CD4-positive, alpha-beta memory T cell (primary cell): ENCODE measurements at regions of chr16 and their contacts with region 1.

Region 1: DNA sequence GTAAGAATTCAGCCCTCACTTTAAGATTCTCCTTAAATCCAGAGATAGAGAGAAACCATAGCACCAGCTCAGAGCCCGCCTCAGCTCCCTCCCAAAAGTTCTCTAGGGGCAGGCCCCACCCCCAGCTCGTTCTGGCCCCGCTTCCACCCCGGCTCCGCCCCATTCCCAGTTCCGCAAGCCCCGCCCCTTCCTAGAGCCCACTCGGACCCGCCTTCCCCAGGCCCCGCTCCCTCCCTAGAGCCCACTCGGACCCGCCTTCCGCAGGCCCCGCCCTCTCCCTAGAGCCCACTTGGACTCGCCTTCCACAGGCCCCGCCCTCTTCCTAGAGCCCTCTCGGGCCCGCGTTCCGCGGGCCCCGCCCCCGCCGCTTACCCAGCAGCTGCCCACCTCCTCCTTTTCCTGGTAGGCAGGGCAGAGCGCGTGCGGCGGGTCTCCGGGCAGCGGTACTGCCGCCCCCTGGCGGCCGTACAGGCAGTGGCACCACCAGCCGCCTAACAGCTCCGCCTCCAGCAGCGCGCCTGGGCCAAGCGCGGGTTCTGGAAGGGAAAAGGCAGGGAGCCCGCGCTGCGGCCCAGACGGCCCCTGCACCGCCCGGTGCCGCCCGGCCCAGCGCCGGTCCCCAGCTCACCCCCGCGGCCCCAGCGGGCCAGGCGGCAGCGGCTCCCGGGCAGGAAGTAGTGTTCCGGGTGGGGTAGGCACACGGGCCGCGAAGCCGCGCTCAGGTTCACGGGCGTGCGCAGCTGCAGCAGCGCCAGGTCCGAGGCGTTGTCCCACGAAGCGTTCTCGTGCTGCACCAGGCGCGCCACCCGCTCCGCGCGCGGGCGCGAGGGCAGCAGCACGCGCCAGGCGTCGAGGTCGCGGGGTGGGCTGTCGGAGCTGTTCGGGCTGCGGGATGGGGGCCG is 6.8 kb upstream of the PRSS8 start:
- DNase-seq: peak; percentile 94 to 97 (median 96)
- H3K4me3 ChIP-seq: peak overlapping the region in 1 of 2 donors; percentile 75
- H3K4me3 Mint-ChIP-seq: peak overlapping the region; percentile 63 to 80 (median 74)
- H3K27ac ChIP-seq: peak overlapping the region; percentile 42
- H3K27ac Mint-ChIP-seq: peak overlapping the region; percentile 72 to 94 (median 91)
- H3K4me1 ChIP-seq: peaks cover 15% of the 10 kb centered on the region
- H3K4me1 Mint-ChIP-seq: peaks cover 3 to 14% (median 10%) of the 10 kb centered on the region in 4 donors
- H3K27me3 ChIP-seq: no peaks in the 10 kb centered on the region
- H3K27me3 Mint-ChIP-seq: no peaks in the 10 kb centered on the region

Region 2: GRCh38 chr16:30922960-30923535 is 219.3 kb before region 1 on chr16:
- CTCF ChIA-PET with region 1: no interaction called
- POLR2A ChIA-PET with region 1: no interaction called
- intact Hi-C with region 1: loop called (anchors 1 kb)
- DNase-seq: peak; percentile 95 to 98 (median 97)
- H3K4me3 ChIP-seq: peak overlapping the region; percentile 73 to 92
- H3K4me3 Mint-ChIP-seq: peak overlapping the region; percentile 95 to 100 (median 99)
- H3K27ac ChIP-seq: peak overlapping the region; percentile 90
- H3K27ac Mint-ChIP-seq: peak overlapping the region; percentile 98 to 100 (median 99)
- H3K4me1 ChIP-seq: peaks cover 12% of the 10 kb centered on the region
- H3K4me1 Mint-ChIP-seq: peaks cover 7 to 33% (median 17%) of the 10 kb centered on the region in 4 donors
- H3K27me3 ChIP-seq: no peaks in the 10 kb centered on the region
- H3K27me3 Mint-ChIP-seq: no peaks in the 10 kb centered on the region

Region 3: GRCh38 chr16:30984669-30985400 is 157.5 kb before region 1 on chr16 and contains the start of gene HSD3B7:
- CTCF ChIA-PET with region 1: interaction called, 28 read pairs
- POLR2A ChIA-PET with region 1: interaction called, 10 read pairs
- intact Hi-C with region 1: loop called (anchors 1 kb)
- DNase-seq: peak; percentile 60 to 76 (median 65)
- H3K4me3 ChIP-seq: no peak within 1 kb of the TSS
- H3K4me3 Mint-ChIP-seq: no peak within 1 kb of the TSS
- H3K27ac ChIP-seq: no peak within 1 kb of the TSS
- H3K27ac Mint-ChIP-seq: peak within 1 kb of the TSS in 2 of 7 donors; percentile 63 to 66
- H3K4me1 ChIP-seq: peaks cover 6% of the 10 kb centered on the region
- H3K4me1 Mint-ChIP-seq: peaks cover 0 to 6% (median 0%) of the 10 kb centered on the region in 4 donors
- H3K27me3 ChIP-seq: no peaks in the 10 kb centered on the region
- H3K27me3 Mint-ChIP-seq: no peaks in the 10 kb centered on the region
- total RNA-seq, gene HSD3B7: 3.6 to 4.3 TPM

Region 4: DNA sequence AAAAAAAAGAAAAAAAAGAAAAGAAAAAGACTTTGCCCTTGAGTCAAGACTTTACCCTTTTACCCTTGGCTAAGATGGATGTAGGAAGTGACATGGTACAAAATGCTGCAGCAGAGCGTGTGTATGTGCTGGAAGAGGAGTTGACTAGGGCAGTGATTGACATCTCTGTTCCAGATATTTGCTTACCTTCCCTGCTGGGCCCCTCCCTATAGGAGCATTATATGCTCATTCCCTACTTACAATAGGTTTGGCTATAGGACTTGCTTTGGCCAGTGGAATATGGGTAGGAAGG is 98.2 kb before region 1 on chr16:
- CTCF ChIA-PET with region 1: no interaction called
- POLR2A ChIA-PET with region 1: no interaction called
- intact Hi-C with region 1: no loop called
- DNase-seq: no peak
- H3K4me3 ChIP-seq: no peak overlapping the region
- H3K4me3 Mint-ChIP-seq: no peak overlapping the region
- H3K27ac ChIP-seq: no peak overlapping the region
- H3K27ac Mint-ChIP-seq: no peak overlapping the region
- H3K4me1 ChIP-seq: no peaks in the 10 kb centered on the region
- H3K4me1 Mint-ChIP-seq: peaks cover 0 to 2% (median under 1%) of the 10 kb centered on the region in 4 donors
- H3K27me3 ChIP-seq: no peaks in the 10 kb centered on the region
- H3K27me3 Mint-ChIP-seq: no peaks in the 10 kb centered on the region

Region 5: DNA sequence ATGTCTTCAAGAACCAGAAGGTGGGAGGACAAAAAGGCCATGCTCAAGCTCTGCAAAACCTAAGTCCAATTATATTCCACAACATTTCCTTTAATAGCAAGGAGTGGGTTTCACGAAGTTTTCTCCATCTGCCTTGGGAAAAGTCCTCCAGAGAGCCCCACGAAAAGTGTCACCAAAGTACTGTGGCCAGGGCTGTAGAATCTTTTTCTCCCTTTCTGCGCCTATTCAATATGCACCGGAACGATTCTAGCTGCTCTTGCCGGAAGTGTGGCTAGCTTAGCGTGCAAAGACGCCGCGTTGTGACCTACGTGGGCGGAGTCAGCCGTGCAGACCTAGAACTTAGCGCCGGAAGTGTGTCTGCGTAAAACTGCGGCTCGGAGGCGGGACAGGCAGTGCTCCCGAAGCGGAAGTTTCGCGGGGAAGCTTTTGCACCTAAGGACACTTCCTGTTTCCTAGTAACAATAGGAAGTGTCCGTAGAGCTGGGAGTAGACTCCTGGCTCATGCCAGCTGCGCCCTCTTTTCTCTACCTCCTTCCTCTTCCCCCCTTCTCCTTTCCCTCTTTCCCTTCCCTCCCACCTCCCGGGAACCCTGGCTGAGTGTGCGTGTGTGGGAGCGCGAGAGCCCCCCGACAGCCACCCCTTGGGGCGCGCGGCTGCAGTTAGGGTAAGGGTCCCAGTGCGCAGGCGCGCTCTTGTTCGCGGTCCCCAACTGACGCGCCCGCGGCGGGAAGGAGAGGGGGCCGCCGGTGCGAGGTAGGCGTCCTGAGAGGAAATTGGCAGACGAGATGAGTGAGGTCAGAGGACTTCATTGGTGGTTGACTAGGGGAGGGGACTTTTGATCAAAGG is 68.2 kb before region 1 on chr16 and contains the starts of genes ZNF646 and ZNF668:
- CTCF ChIA-PET with region 1: interaction called, 10 read pairs
- POLR2A ChIA-PET with region 1: interaction called, 67 read pairs
- intact Hi-C with region 1: loop called (anchors 1 kb)
- DNase-seq: peak; percentile 94 to 99 (median 98)
- H3K4me3 ChIP-seq: peak within 1 kb of the TSS; percentile 81 to 86
- H3K4me3 Mint-ChIP-seq: peak within 1 kb of the TSS; percentile 92 to 99 (median 97)
- H3K27ac ChIP-seq: peak within 1 kb of the TSS; percentile 87
- H3K27ac Mint-ChIP-seq: peak within 1 kb of the TSS; percentile 93 to 99 (median 98)
- H3K4me1 ChIP-seq: peaks cover 27% of the 10 kb centered on the region
- H3K4me1 Mint-ChIP-seq: peaks cover 20 to 58% (median 30%) of the 10 kb centered on the region in 4 donors
- H3K27me3 ChIP-seq: no peaks in the 10 kb centered on the region
- H3K27me3 Mint-ChIP-seq: peaks cover 0 to 2% of the 10 kb centered on the region in 2 donors
- total RNA-seq, gene ZNF646: 46.9 to 47.0 TPM
- total RNA-seq, gene ZNF668: 11.7 to 13.6 TPM

Region 6: DNA sequence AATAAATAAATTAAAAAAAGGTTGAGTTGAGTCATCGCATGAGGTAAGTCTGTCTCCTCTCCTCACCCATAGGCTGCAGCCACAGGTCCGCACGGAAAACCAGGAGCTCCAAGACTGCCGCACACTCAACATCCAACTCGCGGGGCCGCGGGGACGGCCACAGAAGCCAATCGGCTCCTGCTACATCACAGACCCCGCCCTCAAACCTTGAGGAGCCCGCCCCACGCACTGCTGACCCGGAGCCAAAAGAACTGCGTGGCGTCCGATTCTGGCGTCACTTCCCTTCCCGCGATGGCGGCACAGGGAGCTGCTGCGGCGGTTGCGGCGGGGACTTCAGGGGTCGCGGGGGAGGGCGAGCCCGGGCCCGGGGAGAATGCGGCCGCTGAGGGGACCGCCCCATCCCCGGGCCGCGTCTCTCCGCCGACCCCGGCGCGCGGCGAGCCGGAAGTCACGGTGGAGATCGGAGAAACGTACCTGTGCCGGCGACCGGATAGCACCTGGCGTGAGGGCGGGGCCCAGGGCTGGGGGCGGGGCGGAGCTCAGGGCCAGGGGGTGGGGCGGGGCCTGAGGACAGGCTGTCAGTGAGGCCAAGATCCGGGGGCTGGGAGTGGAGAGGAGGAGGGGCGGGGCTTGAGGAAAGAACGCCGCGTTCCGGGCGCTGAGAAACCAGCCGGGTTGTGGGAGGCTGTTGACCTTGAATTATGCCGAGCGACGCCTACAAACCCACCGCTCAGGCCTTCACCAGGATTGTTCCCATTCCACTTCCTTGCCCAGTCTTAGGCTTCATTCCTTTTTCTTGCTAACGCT is 24.8 kb before region 1 on chr16 and contains the start of gene KAT8:
- CTCF ChIA-PET with region 1: interaction called, 56 read pairs
- POLR2A ChIA-PET with region 1: interaction called, 121 read pairs
- intact Hi-C with region 1: loop called (anchors 1 kb)
- DNase-seq: peak; percentile 98 to 99 (median 98)
- H3K4me3 ChIP-seq: peak within 1 kb of the TSS; percentile 63 to 76
- H3K4me3 Mint-ChIP-seq: peak within 1 kb of the TSS; percentile 83 to 93 (median 89)
- H3K27ac ChIP-seq: peak within 1 kb of the TSS; percentile 89
- H3K27ac Mint-ChIP-seq: peak within 1 kb of the TSS; percentile 80 to 98 (median 95)
- H3K4me1 ChIP-seq: peaks cover 11% of the 10 kb centered on the region
- H3K4me1 Mint-ChIP-seq: peaks cover 9 to 19% (median 13%) of the 10 kb centered on the region in 4 donors
- H3K27me3 ChIP-seq: no peaks in the 10 kb centered on the region
- H3K27me3 Mint-ChIP-seq: no peaks in the 10 kb centered on the region
- total RNA-seq, gene KAT8: 90.8 to 94.2 TPM

Region 7: DNA sequence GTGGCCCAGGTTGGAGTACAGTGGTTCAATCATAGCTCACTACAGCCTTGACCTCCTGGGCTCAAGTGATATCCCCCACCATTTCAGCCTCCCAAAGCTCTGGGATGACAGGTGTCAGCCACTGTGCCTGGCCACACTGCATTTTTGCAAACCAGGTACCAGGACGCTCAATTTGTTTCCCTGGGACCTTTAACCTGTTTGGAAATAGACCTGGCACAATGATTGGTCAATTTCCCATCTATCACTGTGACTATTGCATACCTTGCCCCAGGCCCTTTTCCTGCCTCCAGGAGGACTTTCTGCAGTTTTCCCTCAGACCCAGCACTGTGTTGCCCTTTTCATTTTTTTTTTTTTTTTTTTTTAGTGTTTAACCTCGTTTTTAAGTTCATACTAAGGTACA is 26.5 kb after region 1 on chr16:
- CTCF ChIA-PET with region 1: interaction called, 12 read pairs
- POLR2A ChIA-PET with region 1: no interaction called
- intact Hi-C with region 1: no loop called
- DNase-seq: no peak
- H3K4me3 ChIP-seq: no peak overlapping the region
- H3K4me3 Mint-ChIP-seq: no peak overlapping the region
- H3K27ac ChIP-seq: no peak overlapping the region
- H3K27ac Mint-ChIP-seq: no peak overlapping the region
- H3K4me1 ChIP-seq: no peaks in the 10 kb centered on the region
- H3K4me1 Mint-ChIP-seq: no peaks in the 10 kb centered on the region
- H3K27me3 ChIP-seq: no peaks in the 10 kb centered on the region
- H3K27me3 Mint-ChIP-seq: no peaks in the 10 kb centered on the region

Region 8: GRCh38 chr16:31202414-31203375 is 60.3 kb after region 1 on chr16 and contains the start of gene PYCARD:
- CTCF ChIA-PET with region 1: interaction called, 7 read pairs
- POLR2A ChIA-PET with region 1: interaction called, 15 read pairs
- intact Hi-C with region 1: no loop called
- DNase-seq: peak in 4 of 5 donors; percentile 37 to 49 (median 44)
- H3K4me3 ChIP-seq: peak within 1 kb of the TSS; percentile 57 to 94
- H3K4me3 Mint-ChIP-seq: peak within 1 kb of the TSS; percentile 88 to 94 (median 90)
- H3K27ac ChIP-seq: peak within 1 kb of the TSS; percentile 59
- H3K27ac Mint-ChIP-seq: peak within 1 kb of the TSS; percentile 70 to 92 (median 84)
- H3K4me1 ChIP-seq: peaks cover 49% of the 10 kb centered on the region
- H3K4me1 Mint-ChIP-seq: peaks cover 35 to 65% (median 46%) of the 10 kb centered on the region in 4 donors
- H3K27me3 ChIP-seq: no peaks in the 10 kb centered on the region
- H3K27me3 Mint-ChIP-seq: no peaks in the 10 kb centered on the region
- total RNA-seq, gene PYCARD: 25.9 to 26.6 TPM